Heart right ventricle (tissue), 16 donors: ENCODE measurements at regions of chr1 and their contacts with region 1.

Region 1: DNA sequence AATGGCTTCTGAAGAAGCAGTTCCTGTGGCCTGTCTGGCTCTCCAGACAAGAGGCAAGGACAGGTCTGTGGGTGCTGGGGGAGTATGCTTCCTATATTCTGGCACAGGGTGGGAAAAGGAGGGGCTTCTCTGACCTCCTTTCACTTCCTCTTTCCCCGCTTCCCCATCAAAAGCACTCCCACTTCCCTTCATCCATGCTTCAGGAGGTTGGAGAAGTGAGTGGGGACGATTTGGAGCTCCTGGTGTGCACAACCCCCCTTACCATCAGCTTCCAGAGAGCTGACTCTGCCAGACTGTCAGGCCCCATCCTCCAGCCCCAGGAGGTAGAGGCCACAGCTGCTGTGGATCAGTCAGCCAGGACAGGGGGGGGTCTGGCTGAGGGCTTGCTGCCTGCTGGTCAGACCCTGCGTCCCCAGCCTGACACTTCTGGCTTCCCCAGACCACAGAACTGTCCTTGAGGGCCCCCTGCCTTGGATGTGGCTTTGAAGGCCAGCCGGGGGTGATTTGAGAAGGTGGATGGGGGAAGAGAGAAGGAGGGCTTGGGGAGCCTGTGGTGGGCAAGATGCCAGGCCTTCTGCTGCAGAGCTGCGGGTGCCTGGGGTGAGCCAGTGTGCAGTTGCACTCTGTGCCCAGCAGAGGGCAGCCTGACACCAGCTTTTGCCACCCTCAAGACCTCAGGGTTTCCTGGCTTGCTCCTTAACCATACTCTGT is 21.5 kb upstream of the TMEM222 start:
- DNase-seq: peak; percentile 78 to 84
- ATAC-seq: peak; percentile 79 to 93 (median 88)
- H3K4me3 ChIP-seq: no peak overlapping the region
- H3K27ac ChIP-seq: peak overlapping the region; percentile 65 to 88 (median 82)
- H3K4me1 ChIP-seq: peaks cover 11 to 47% (median 30%) of the 10 kb centered on the region in 9 donors
- H3K27me3 ChIP-seq: no peaks in the 10 kb centered on the region
- CTCF ChIP-seq: peak; percentile 95 to 99 (median 99)

Region 2: DNA sequence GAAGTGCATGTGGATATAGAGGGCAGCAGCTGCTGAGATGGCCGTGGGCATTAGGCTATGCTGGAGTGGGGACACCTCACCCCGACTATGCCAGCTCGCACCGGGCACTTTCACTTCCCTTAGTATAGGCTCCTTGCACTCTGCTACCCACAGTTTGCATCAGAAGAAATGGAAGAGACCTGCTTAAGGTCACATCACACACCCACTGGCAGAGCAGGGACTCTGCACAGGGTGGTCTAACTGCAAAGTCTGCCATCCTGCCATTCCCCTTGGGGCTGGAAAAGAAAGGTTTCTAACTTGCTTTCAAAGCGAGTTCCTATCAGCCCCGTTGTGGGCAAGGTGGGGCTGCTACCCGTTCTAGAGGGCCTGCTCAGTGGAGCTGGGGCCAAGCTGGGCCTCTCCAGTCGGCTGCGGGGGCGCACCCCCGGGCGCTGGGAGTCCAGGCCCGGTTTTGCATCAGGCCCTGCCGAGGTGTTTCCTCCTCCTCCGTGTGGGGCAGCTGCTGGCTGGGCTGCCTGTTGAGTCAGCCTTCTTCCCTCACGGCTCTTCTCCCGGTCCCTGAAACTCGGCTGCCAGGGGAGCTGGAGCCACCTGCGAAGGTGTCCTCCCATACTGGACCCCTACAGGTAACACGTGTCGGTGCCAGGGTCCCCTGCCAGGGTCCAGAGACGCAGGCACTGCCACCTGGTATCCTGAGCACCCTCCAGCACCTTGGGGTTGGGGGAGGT is 41.2 kb after region 1 on chr1 and contains the start of gene SYTL1:
- intact Hi-C with region 1: no loop called
- DNase-seq: no peak
- ATAC-seq: peak in 6 of 8 donors; percentile 20 to 51 (median 26)
- H3K4me3 ChIP-seq: peak within 1 kb of the TSS in 5 of 10 donors; percentile 3 to 60 (median 19)
- H3K27ac ChIP-seq: peak within 1 kb of the TSS in 3 of 10 donors; percentile 19 to 92 (median 67)
- H3K4me1 ChIP-seq: peaks cover 0 to 34% (median 0%) of the 10 kb centered on the region in 9 donors
- H3K27me3 ChIP-seq: no peaks in the 10 kb centered on the region
- CTCF ChIP-seq: no peak
- total RNA-seq, gene SYTL1: 0.30 to 4.3 (median 0.68) TPM

Region 3: GRCh38 chr1:27357281-27358037 is 57.0 kb after region 1 on chr1:
- intact Hi-C with region 1: loop called in 2 of 10 experiments (anchors 10 kb)
- DNase-seq: peak; percentile 69 to 76
- ATAC-seq: peak; percentile 33 to 87 (median 69)
- H3K4me3 ChIP-seq: peak overlapping the region in 2 of 10 donors; percentile 15 to 41
- H3K27ac ChIP-seq: peak overlapping the region in 2 of 10 donors; percentile 21 to 36
- H3K4me1 ChIP-seq: peaks cover 0 to 29% (median 10%) of the 10 kb centered on the region in 9 donors
- H3K27me3 ChIP-seq: no peaks in the 10 kb centered on the region
- CTCF ChIP-seq: peak; percentile 94 to 100 (median 98)

Region 4: DNA sequence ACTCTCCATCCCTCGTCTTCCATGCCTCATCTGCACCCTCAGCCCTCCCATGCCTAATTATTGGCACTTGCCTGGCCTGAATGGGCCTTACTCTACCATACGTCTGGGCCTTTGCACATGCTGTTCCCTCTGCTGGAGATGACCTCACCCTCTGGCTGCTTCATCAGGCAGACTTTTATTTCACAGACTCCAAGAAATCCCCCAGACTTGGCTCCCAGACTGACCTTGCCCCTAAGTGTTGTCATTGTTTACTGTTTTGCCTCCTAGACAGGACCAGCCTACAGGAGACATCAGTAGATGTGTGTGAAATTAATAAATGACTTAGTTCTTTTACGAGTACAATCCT is 308.7 kb after region 1 on chr1:
- intact Hi-C with region 1: loop called (anchors 1 to 10 kb)
- DNase-seq: no peak
- ATAC-seq: peak in 1 of 8 donors; percentile 4
- H3K4me3 ChIP-seq: no peak overlapping the region
- H3K27ac ChIP-seq: no peak overlapping the region
- H3K4me1 ChIP-seq: peaks cover 0 to 48% (median 25%) of the 10 kb centered on the region in 9 donors
- H3K27me3 ChIP-seq: no peaks in the 10 kb centered on the region
- CTCF ChIP-seq: no peak

Region 5: GRCh38 chr1:27662707-27663393 is 362.4 kb after region 1 on chr1:
- intact Hi-C with region 1: loop called in 7 of 10 experiments (anchors 2 to 10 kb)
- DNase-seq: peak; percentile 73 to 86
- ATAC-seq: peak; percentile 49 to 75 (median 68)
- H3K4me3 ChIP-seq: no peak overlapping the region
- H3K27ac ChIP-seq: peak overlapping the region in 9 of 10 donors; percentile 23 to 85 (median 76)
- H3K4me1 ChIP-seq: peaks cover 8 to 65% (median 38%) of the 10 kb centered on the region in 9 donors
- H3K27me3 ChIP-seq: no peaks in the 10 kb centered on the region
- CTCF ChIP-seq: peak; percentile 85 to 94 (median 91)

Region 6: DNA sequence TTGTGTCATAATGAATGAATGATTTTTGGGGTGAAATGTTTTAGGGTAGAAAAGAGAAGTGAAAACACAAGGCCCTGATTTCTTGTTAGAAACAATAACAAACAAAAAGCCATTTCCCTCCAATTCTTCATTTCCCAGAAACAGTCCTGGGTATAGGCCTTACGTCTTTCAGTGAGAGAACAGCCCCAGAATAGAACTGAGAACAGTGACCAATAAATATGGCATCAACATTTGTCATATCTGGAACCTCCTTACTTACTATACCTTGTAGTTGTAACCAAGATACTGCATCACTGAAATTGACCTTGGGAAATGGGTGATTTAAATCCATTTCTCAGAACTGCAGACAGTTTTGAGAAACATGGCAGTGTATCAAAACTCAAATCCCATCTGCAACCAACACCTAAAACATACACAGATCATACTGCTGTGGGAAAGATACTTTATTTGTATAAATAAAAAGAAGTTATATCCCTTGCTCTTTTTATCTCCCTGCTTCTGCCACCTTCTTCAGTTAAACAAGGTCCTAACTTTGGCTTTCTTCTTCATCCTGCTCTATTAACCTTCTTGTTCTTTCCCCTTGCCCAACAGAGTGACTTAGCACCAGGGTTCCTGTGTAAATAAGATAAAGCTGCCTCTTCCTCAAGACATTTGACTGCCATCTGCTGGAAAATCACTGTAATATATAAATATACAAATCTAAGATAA is 678.8 kb after region 1 on chr1:
- intact Hi-C with region 1: loop called in 1 of 10 experiments (anchors 5 kb)
- DNase-seq: no peak
- ATAC-seq: peak in 6 of 8 donors; percentile 71 to 78 (median 74)
- H3K4me3 ChIP-seq: no peak overlapping the region
- H3K27ac ChIP-seq: peak overlapping the region in 3 of 10 donors; percentile 9 to 61 (median 38)
- H3K4me1 ChIP-seq: peaks cover 0 to 20% (median 13%) of the 10 kb centered on the region in 9 donors
- H3K27me3 ChIP-seq: no peaks in the 10 kb centered on the region
- CTCF ChIP-seq: peak; percentile 14 to 65 (median 57)